ENCODE measurements at regions of chr19 and their contacts with region 1.

Region 1: DNA sequence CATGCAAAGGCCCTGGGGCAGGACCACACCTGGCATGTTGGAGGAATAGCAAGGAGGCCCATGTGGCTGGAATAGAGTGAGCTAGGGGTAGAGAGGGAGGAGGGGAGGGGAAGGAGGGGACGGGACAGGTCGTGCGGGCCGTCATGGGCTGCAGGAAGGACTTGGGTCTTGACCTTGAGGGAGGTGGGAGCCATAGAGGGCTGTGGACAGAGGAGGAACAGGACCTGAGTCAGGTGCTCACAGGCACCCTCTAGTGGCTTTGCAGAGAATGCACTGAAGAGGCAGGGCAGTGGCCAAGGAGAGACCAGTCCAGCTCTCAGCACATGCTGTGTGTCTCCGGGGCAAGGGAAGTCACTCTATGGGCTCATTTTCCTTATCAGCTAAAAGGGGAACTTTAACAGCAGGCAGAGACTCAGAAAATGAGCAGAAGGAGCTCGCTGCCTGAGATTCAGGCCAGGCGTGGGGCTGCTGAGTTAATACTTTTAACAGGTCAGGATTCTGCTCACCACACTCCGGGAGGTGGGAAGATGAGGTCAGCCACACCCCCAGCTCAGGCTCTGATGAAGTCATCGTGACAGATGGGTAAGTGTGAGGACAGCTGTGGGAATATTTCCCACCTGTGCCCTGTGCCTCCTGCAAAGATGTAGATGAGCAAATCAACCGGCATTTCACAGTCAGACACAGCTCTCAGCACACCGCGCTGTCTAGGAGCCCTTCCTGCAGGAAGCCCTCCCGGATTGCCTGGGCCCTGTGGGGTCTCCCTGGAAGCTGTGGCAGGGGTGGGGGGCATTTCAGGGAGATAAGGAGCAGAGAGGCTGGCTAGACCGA is 6.0 kb upstream of the TNFAIP8L1 start:
- H3K4me3 Mint-ChIP-seq: no peak overlapping the region
- H3K27ac Mint-ChIP-seq: peak overlapping the region; percentile 83
- H3K4me1 Mint-ChIP-seq: peaks cover 33% of the 10 kb centered on the region
- H3K27me3 Mint-ChIP-seq: peaks cover 2% of the 10 kb centered on the region

Region 2: GRCh38 chr19:4576016-4576933 is 57.1 kb before region 1 on chr19:
- intact Hi-C with region 1: loop called (anchors 1 kb)
- H3K4me3 Mint-ChIP-seq: no peak overlapping the region
- H3K27ac Mint-ChIP-seq: no peak overlapping the region
- H3K4me1 Mint-ChIP-seq: peaks cover 22% of the 10 kb centered on the region
- H3K27me3 Mint-ChIP-seq: peaks cover 68% of the 10 kb centered on the region

Region 3: DNA sequence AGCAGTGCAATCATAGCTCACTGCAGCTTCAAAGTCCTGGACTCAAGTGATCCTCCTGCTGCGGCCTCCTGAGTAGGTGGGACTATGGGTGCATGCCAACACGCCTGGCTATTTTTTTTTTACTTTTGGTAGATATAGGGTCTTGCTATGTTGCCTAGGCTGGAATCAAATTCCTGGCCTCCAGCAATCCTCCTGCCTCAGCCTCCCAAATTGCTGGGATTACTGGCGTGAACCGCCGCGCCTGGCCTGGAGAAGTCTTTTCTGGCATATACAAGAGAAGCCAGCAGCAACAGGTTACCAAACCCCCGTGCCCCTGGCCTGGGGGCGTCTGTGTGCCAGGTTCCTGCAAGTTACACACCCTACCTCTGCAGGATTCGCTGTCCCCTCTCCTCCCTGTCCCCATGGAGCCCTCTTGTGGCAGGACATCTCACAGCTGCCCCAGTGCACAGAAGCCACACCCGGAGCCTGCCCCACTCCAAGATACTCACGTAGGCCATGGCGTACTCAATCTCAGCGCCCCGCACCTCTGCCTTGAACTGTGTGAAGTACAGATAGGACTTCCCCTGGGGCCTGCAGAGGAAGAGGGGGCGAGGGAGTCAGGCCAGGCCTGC is 26.9 kb after region 1 on chr19:
- intact Hi-C with region 1: no loop called
- H3K4me3 Mint-ChIP-seq: no peak overlapping the region
- H3K27ac Mint-ChIP-seq: peak overlapping the region; percentile 42
- H3K4me1 Mint-ChIP-seq: peaks cover 40% of the 10 kb centered on the region
- H3K27me3 Mint-ChIP-seq: no peaks in the 10 kb centered on the region

Measured in dendritic cell treated with granulocyte-macrophage colony-stimulating factor and Interleukin-4, amounts not matched to agents 40 ng/mL and 50 ng/mL, for 4 days (primary cell).